Gastrocnemius medialis (tissue), 4 donors: ENCODE measurements at regions of chr5 and their contacts with region 1.

Region 1: GRCh38 chr5:148374692-148375360 is 8.9 kb upstream of the FBXO38 start:
- DNase-seq: no peak
- ATAC-seq: peak; percentile 26 to 27
- H3K4me3 ChIP-seq: no peak overlapping the region
- H3K27ac ChIP-seq: no peak overlapping the region
- H3K4me1 ChIP-seq: peaks cover 0 to 4% of the 10 kb centered on the region in 2 donors
- H3K27me3 ChIP-seq: no peaks in the 10 kb centered on the region
- CTCF ChIP-seq: peak in 3 of 5 experiments; percentile 27 to 62 (median 41)
- POLR2A ChIP-seq: no peak

Region 2: DNA sequence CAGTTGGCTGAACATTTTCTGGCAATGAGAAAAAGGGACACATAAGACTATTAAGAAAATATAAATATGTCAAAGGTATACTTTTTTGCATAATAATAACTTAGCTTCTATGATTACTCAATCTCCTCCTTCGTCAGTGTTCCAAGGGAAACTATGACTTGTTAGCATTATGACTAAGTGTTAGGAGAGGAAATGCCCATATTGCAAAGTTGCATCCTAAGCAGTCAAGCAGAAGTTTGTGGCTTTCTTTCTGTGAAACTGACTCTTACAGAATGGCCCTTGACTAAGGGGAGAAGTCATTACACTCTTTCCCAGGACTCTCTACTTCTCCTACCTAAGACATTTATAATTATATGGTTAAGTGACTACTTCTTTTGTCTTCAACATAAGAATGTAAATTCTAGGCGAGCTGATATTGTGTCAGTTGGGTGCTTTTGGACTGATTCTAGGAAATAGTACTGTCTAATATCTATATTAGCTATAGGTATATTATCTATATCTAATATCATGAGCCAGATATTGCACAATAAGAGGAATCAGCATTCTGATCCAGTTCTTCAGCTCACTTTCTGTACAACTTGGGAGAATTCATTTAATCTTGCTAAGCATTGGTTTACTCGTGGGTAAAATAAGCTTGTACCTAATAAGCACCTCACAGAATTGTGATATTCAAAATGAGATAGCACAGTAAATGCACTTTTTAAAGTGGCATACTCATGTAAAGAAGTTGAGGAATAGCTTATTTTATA is 188.4 kb before region 1 on chr5:
- in situ Hi-C with region 1: no loop called
- intact Hi-C with region 1: loop called (anchors 10 kb)
- DNase-seq: no peak
- ATAC-seq: peak in 1 of 2 donors; percentile 39
- H3K4me3 ChIP-seq: no peak overlapping the region
- H3K27ac ChIP-seq: no peak overlapping the region
- H3K4me1 ChIP-seq: no peaks in the 10 kb centered on the region
- H3K27me3 ChIP-seq: no peaks in the 10 kb centered on the region
- CTCF ChIP-seq: no peak
- POLR2A ChIP-seq: no peak

Region 3: DNA sequence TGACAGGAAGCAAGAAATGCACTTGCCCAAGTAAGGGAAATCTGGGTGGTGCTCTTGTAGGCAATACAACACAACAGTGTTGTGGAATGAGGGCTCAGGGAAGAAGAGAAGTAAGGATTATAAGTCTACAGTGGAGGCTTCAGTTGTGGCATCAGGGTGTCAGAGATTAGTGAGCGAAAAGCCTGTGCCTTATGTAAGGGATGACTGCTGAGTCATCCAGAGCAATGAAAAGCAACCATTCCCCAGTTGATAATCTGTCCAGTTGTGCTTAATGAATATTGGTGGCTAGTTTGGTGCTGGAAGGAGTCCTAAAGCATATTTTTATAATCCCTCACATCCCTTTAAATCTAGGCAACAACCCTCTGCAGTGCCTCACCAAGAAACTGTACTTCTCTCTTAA is 51.0 kb after region 1 on chr5:
- in situ Hi-C with region 1: no loop called
- intact Hi-C with region 1: no loop called
- DNase-seq: no peak
- ATAC-seq: no peak
- H3K4me3 ChIP-seq: no peak overlapping the region
- H3K27ac ChIP-seq: peak overlapping the region in 1 of 4 donors; percentile 3
- H3K4me1 ChIP-seq: peaks cover 0 to 5% of the 10 kb centered on the region in 2 donors
- H3K27me3 ChIP-seq: no peaks in the 10 kb centered on the region
- CTCF ChIP-seq: no peak
- POLR2A ChIP-seq: no peak

Region 4: GRCh38 chr5:148542812-148543211 is 168.0 kb after region 1 on chr5:
- in situ Hi-C with region 1: no loop called
- intact Hi-C with region 1: no loop called
- DNase-seq: no peak
- ATAC-seq: no peak
- H3K4me3 ChIP-seq: no peak overlapping the region
- H3K27ac ChIP-seq: no peak overlapping the region
- H3K4me1 ChIP-seq: no peaks in the 10 kb centered on the region
- H3K27me3 ChIP-seq: no peaks in the 10 kb centered on the region
- CTCF ChIP-seq: no peak
- POLR2A ChIP-seq: no peak